Activated T-helper 2 cell treated with anti-CD3 and anti-CD28 coated beads, Interferon-gamma antibody, Interleukin-2, Interleukin-4, amounts not matched to agents 10 μg/mL and 5 μg/mL and 100 μg/mL, durations not matched to agents 14 hours and 24 hours and 36 hours (primary cell): ENCODE measurements at regions of chr15 and their contacts with region 1.

Region 1: GRCh38 chr15:68820295-68821189 is at the start of gene ANP32A:
- DNase-seq: peak; percentile 93
- H3K4me3 Mint-ChIP-seq: peak within 1 kb of the TSS; percentile 100
- H3K27ac Mint-ChIP-seq: peak within 1 kb of the TSS; percentile 100
- H3K4me1 Mint-ChIP-seq: peaks cover 30% of the 10 kb centered on the region
- H3K27me3 Mint-ChIP-seq: no peaks in the 10 kb centered on the region
- total RNA-seq, gene ANP32A: 259 and 265 TPM in 2 replicates

Region 2: GRCh38 chr15:68783226-68784058 is 37.1 kb before region 1 on chr15:
- intact Hi-C with region 1: loop called (anchors 2 kb)
- DNase-seq: peak; percentile 30
- H3K4me3 Mint-ChIP-seq: no peak overlapping the region
- H3K27ac Mint-ChIP-seq: peak overlapping the region; percentile 49
- H3K4me1 Mint-ChIP-seq: peaks cover 40% of the 10 kb centered on the region
- H3K27me3 Mint-ChIP-seq: no peaks in the 10 kb centered on the region

Region 3: GRCh38 chr15:68797599-68798345 is 22.8 kb before region 1 on chr15:
- intact Hi-C with region 1: loop called (anchors 1 kb)
- DNase-seq: no peak
- H3K4me3 Mint-ChIP-seq: peak overlapping the region; percentile 18
- H3K27ac Mint-ChIP-seq: peak overlapping the region; percentile 82
- H3K4me1 Mint-ChIP-seq: peaks cover 80% of the 10 kb centered on the region
- H3K27me3 Mint-ChIP-seq: no peaks in the 10 kb centered on the region